Activated naive CD4-positive, alpha-beta T cell treated with anti-CD3 and anti-CD28 coated beads for 36 hours (primary cell): ENCODE measurements at regions of chr17 and their contacts with region 1.

Region 1: GRCh38 chr17:81394921-81395599 is at the start of gene BAHCC1:
- DNase-seq: peak; percentile 95
- H3K4me3 Mint-ChIP-seq: peak within 1 kb of the TSS; percentile 54
- H3K27ac Mint-ChIP-seq: no peak within 1 kb of the TSS
- H3K4me1 Mint-ChIP-seq: peaks cover 29% of the 10 kb centered on the region
- H3K27me3 Mint-ChIP-seq: peaks cover 53% of the 10 kb centered on the region
- total RNA-seq, gene BAHCC1: 0.02 TPM in 1 of 2 experiments, not detected in the other

Region 2: DNA sequence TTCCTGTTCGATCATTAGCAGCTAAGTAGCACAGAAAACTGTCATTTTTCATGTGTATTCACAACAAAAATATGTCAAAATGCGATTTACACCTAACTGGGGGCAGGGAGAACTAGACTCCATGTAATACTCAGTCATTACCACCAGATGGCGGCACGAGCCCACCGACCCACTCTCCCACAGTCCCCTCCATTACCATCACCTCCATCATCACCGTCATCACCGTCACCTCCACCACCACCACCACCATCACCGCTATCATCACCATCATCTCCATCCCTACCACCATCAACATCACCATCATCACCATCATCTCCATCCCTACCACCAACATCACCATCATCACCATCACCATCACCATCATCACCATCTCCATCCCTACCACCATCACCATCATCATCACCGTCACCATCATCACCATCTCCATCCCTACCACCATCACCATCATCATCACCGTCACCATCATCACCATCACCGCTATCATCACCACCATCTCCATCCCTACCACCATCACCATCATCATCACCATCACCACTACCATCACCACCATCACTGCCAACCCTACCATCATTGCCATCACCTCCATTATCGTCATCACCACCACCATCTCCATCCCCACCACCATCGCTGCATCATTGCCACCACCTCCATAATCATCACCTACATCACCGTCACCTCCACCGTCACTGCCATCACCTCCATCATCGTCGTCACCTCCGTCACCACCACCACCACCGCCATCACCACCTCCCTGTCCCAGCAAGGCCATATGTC is 141.5 kb before region 1 on chr17:
- CTCF ChIA-PET with region 1: no interaction called
- intact Hi-C with region 1: loop called (anchors 10 kb)
- DNase-seq: peak; percentile 68
- H3K4me3 Mint-ChIP-seq: no peak overlapping the region
- H3K27ac Mint-ChIP-seq: no peak overlapping the region
- H3K4me1 Mint-ChIP-seq: peaks cover 5% of the 10 kb centered on the region
- H3K27me3 Mint-ChIP-seq: no peaks in the 10 kb centered on the region

Region 3: GRCh38 chr17:81294856-81295680 is 100.0 kb before region 1 on chr17 and contains the start of gene SLC38A10:
- CTCF ChIA-PET with region 1: interaction called, 3 read pairs
- intact Hi-C with region 1: loop called (anchors 5 kb)
- DNase-seq: peak; percentile 95
- H3K4me3 Mint-ChIP-seq: peak within 1 kb of the TSS; percentile 92
- H3K27ac Mint-ChIP-seq: peak within 1 kb of the TSS; percentile 91
- H3K4me1 Mint-ChIP-seq: peaks cover 36% of the 10 kb centered on the region
- H3K27me3 Mint-ChIP-seq: no peaks in the 10 kb centered on the region
- total RNA-seq, gene SLC38A10: 29.1 to 31.9 TPM

Region 4: GRCh38 chr17:81371910-81372760 is 22.9 kb before region 1 on chr17:
- CTCF ChIA-PET with region 1: no interaction called
- intact Hi-C with region 1: no loop called
- DNase-seq: no peak
- H3K4me3 Mint-ChIP-seq: no peak overlapping the region
- H3K27ac Mint-ChIP-seq: no peak overlapping the region
- H3K4me1 Mint-ChIP-seq: no peaks in the 10 kb centered on the region
- H3K27me3 Mint-ChIP-seq: no peaks in the 10 kb centered on the region

Region 5: DNA sequence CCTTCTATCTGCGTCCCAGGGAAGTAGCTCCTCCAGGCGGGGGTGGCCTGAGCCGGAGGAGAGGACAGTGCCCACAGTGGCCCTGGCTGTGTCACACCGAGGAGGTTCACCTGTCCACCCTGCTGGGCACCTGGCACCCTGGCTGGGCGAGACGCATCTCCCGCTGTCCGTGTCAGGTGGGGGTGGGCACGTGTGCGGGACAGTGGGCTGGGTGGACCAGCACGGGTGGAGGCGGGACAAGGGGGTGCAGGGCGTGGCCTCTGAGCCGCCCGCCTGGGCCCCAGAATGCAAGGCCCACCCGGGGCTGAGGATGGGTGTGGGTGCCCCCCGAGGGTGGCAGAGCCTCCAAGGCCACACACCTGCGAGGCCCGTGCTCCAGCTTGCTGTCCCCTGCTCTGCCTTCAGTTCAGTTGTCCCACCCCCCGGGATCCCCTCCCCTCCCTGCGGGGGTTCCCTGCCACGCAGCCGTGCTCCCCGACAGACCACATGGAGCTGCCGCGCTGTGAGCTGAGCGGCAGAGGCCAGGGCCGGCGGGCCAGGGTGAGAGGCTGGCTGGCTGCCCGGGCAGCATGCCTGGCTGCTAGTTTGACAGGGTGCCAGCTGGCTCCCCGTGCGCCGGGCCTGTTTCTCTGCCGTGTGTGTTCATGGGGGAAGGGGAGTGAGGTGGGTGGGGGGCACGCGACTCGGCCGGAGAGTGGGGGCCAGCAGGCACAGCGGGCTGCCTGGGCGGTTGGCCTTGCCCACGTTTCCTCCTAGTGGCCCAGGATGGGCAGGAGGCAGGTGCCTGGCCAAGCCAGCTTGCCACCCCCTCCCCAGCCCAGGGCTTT is 34.1 kb after region 1 on chr17:
- CTCF ChIA-PET with region 1: no interaction called
- intact Hi-C with region 1: loop called (anchors 5 kb)
- DNase-seq: no peak
- H3K4me3 Mint-ChIP-seq: no peak overlapping the region
- H3K27ac Mint-ChIP-seq: no peak overlapping the region
- H3K4me1 Mint-ChIP-seq: peaks cover 12% of the 10 kb centered on the region
- H3K27me3 Mint-ChIP-seq: peaks cover 21% of the 10 kb centered on the region